Calu3 (cell line): ENCODE measurements at regions of chr10 and their contacts with region 1.

Region 1: GRCh38 chr10:3757638-3758490 is 27.1 kb downstream of the KLF6 start:
- DNase-seq: no peak
- H3K4me3 Mint-ChIP-seq: no peak overlapping the region
- H3K27ac Mint-ChIP-seq: peak overlapping the region; percentile 83
- H3K4me1 Mint-ChIP-seq: peaks cover 64% of the 10 kb centered on the region
- H3K27me3 Mint-ChIP-seq: no peaks in the 10 kb centered on the region
- CTCF ChIP-seq: no peak

Region 2: DNA sequence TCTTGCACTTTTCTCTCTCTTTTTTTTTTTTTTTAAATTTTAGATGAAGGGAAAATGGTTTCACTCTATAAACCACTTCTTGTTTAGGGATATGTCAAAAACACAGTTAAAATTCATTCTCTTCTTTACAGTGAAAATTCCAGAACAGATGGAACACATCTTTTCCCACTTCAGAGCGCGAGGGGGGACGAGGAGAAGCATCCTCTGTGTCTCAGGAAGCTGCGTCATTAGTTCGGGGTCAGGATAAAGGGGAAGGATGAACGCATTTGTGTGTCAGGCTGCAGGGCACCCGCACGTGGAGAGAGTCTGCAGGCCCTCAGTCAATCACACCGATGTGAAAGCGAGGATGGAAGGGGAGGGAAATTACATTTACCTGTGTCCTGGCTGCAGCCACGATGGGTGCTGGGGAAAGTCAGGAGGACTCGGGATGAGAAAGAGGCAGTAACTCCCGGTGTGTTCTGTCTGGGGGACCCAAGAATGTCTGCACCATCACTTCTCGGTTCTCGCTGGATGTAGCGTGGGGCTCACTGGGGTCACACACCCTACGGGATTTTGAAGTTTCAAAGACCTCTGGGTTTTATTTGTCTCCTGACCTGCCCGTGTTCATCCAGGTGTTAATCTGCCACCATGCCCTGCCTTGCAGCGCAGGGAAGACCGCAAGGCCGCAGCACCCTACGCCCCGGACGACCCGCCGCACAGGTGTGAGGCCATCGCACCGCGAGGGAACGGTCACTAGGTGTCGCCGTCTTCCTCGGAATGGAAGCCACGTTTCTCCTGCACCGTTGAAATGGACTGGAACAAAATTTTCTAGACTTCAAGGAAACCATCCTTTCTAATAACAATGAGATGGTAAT is 518.6 kb before region 1 on chr10:
- CTCF ChIA-PET with region 1: no interaction called
- intact Hi-C with region 1: loop called (anchors 5 kb)
- DNase-seq: peak; percentile 85
- H3K4me3 Mint-ChIP-seq: no peak overlapping the region
- H3K27ac Mint-ChIP-seq: no peak overlapping the region
- H3K4me1 Mint-ChIP-seq: peaks cover 9% of the 10 kb centered on the region
- H3K27me3 Mint-ChIP-seq: no peaks in the 10 kb centered on the region
- CTCF ChIP-seq: peak; percentile 73

Region 3: GRCh38 chr10:3467052-3467951 is 290.6 kb before region 1 on chr10:
- CTCF ChIA-PET with region 1: interaction called, 4 read pairs
- intact Hi-C with region 1: loop called (anchors 5 kb)
- DNase-seq: peak; percentile 83
- H3K4me3 Mint-ChIP-seq: peak overlapping the region; percentile 36
- H3K27ac Mint-ChIP-seq: peak overlapping the region; percentile 86
- H3K4me1 Mint-ChIP-seq: peaks cover 70% of the 10 kb centered on the region
- H3K27me3 Mint-ChIP-seq: no peaks in the 10 kb centered on the region
- CTCF ChIP-seq: peak; percentile 61

Region 4: DNA sequence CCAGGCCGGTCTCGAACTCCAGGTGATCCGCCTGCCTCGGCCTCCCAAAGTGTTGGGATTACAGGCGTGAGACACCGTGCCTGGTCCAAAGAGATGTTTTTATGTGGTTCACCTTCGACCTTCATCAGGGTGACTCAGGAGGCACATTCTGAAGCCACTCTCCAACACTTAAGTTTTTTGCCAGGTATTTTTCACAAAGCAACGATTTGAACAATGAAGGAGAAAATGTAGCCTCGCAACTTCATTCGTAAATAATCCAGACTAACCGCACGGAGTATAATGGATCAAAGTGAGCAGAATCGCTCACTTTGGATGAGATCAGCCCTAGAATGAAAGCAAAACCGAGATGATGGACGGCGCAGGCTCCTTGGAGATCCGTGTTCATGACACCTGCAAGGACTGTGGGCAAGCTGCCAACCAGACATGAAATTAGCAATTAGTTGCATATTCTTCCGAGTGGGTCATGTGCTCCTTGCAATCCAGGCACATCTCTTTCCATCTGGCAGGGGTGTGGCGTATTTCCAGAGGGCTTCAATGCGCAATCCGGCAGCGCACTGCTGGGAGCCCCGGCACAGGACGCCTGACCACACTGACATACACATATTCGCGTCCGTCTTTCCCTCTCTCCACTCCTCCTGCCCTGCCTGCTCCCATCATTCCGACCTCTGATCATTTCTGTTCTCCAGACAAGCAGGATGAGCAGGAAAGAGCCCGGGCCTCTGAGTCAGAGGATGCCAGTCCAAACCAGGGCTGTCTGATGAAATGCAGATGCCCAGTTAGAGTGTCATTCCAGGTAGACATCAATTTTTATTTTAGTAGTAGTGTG is 121.3 kb before region 1 on chr10:
- CTCF ChIA-PET with region 1: interaction called, 3 read pairs
- intact Hi-C with region 1: loop called (anchors 10 kb)
- DNase-seq: peak; percentile 10
- H3K4me3 Mint-ChIP-seq: peak overlapping the region; percentile 59
- H3K27ac Mint-ChIP-seq: peak overlapping the region; percentile 89
- H3K4me1 Mint-ChIP-seq: peaks cover 54% of the 10 kb centered on the region
- H3K27me3 Mint-ChIP-seq: no peaks in the 10 kb centered on the region
- CTCF ChIP-seq: no peak

Region 5: DNA sequence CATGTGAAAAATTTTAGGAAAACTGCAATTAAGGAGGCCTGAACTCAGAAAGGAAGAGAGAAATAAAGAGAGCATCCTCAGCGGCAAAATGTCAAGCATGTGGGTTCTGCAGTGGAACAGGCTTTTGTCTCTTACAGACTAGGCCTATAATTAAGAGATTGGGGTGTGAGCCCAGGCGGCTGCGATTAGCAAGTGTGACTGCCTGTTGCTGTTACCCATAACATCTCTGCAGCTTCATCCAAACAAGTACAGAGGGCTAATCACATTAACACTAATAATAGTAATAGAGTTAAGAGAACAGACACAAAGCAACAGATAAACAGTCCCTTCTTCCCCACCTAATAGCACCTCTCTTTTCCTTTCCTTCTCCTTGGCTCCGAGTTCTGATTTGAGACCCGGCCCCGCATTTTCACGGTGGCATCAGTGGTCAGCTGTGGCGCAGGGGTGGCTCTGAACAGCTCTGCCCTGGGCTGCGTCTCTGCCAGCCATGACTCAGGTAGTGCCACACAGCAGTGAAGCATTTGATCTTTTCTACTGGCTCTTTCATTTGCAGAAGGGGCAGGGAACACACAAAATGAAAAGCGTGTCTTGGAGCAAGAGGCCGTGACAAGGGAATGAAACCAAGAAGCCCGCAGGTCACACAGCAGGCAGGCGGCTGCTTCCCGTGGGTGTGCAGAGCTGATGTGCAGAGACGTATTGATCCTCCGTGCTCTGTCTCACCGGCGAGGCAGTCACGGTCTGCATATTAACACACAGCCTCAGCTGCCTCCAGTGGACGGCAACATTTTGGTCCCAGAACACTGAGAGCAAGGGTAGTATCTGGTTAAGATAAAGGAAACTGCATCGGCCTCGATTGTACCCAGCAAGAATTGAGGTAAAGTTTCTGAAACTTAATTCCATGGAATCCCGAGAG is 76.0 kb before region 1 on chr10:
- CTCF ChIA-PET with region 1: no interaction called
- intact Hi-C with region 1: loop called (anchors 10 kb)
- DNase-seq: peak; percentile 35
- H3K4me3 Mint-ChIP-seq: peak overlapping the region; percentile 58
- H3K27ac Mint-ChIP-seq: peak overlapping the region; percentile 5
- H3K4me1 Mint-ChIP-seq: peaks cover 10% of the 10 kb centered on the region
- H3K27me3 Mint-ChIP-seq: no peaks in the 10 kb centered on the region
- CTCF ChIP-seq: no peak